ENCODE measurements at regions of chr15 and their contacts with region 1.

Region 1: DNA sequence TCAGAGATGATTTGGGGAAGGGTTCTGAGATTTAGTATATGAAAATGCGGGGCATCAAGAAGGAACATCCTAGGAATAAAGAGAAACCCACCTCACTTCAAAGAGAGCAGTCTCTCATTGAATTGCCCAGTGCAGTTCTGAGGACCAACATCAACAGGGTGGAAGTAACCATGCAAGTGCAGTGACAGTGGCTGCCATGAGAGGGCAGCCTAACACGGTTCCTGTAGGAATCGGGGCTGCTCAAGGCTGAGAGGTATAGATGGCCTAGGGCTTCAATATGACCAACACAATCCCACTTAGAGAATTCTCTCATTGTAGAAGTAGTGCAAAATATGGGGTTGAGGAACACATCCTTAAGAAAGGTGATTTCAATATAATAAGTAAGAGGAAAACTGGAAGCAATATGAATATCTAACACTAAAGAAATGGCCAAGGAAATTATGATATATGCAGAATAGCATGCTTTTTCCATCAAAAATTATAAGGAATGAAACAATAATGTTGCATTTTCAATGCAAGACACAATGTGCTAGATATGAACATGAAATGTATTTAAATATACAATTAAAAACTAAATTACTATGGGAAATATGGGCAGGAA is 51.1 kb upstream of the ARRDC4 start:
- DNase-seq: peak; percentile 2
- H3K4me3 ChIP-seq: no peak overlapping the region
- H3K27ac ChIP-seq: no peak overlapping the region
- H3K4me1 ChIP-seq: peaks cover 0 to 2% (median 1%) of the 10 kb centered on the region in 3 donors
- H3K27me3 ChIP-seq: peaks cover 0 to 34% (median 0%) of the 10 kb centered on the region in 4 donors
- CTCF ChIP-seq: peak; percentile 54 to 92 (median 84)
- POLR2A ChIP-seq: no peak

Region 2: GRCh38 chr15:97708252-97708651 is 201.1 kb before region 1 on chr15:
- intact Hi-C with region 1: no loop called
- DNase-seq: no peak
- H3K4me3 ChIP-seq: no peak overlapping the region
- H3K27ac ChIP-seq: no peak overlapping the region
- H3K4me1 ChIP-seq: no peaks in the 10 kb centered on the region
- H3K27me3 ChIP-seq: no peaks in the 10 kb centered on the region
- CTCF ChIP-seq: no peak
- POLR2A ChIP-seq: no peak

Region 3: GRCh38 chr15:98085003-98085639 is 175.7 kb after region 1 on chr15:
- intact Hi-C with region 1: loop called (anchors 5 kb)
- DNase-seq: no peak
- H3K4me3 ChIP-seq: no peak overlapping the region
- H3K27ac ChIP-seq: no peak overlapping the region
- H3K4me1 ChIP-seq: no peaks in the 10 kb centered on the region
- H3K27me3 ChIP-seq: no peaks in the 10 kb centered on the region
- CTCF ChIP-seq: peak; percentile 31 to 81 (median 60)
- POLR2A ChIP-seq: no peak

Region 4: DNA sequence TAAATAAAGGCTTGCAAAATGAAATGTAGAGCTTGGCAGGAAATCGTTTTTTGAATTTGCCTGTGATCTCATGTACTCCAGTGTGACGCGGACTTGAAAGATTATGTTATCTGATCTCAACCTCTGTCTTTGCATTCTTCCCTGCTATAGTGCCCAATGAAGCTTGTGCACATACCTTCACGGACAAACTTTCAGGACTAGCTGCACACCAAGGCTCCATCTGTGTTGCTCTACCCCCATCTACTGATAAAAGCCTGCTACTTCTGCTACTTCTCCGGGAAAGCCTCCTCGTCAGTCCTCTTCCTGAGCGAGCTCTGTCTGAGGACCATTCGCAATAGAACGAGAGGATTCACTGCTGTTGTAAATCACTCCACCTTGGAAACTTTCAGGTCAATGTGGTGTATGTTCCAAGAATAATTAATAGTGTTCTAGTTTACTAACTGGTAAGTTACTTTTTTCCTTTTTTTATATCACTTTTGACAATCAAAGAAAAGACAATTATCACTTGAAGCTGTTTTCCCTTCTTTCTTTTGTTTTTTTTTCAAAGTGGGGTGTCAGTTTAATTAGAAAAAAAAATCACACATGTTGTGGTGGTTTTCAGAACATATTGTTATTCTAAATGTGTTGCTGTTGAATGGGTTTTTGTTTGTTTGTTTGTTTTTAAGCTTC is 268.7 kb after region 1 on chr15:
- intact Hi-C with region 1: loop called (anchors 5 kb)
- DNase-seq: no peak
- H3K4me3 ChIP-seq: no peak overlapping the region
- H3K27ac ChIP-seq: no peak overlapping the region
- H3K4me1 ChIP-seq: no peaks in the 10 kb centered on the region
- H3K27me3 ChIP-seq: peaks cover 0 to 43% (median 0%) of the 10 kb centered on the region in 4 donors
- CTCF ChIP-seq: peak; percentile 27 to 84 (median 66)
- POLR2A ChIP-seq: no peak

Measured in esophagus squamous epithelium (tissue), 5 donors.